Activated naive CD4-positive, alpha-beta T cell treated with anti-CD3 and anti-CD28 coated beads for 36 hours (primary cell): ENCODE measurements at regions of chr7 and their contacts with region 1.

Region 1: GRCh38 chr7:149873074-149873969 is at the start of gene ATP6V0E2:
- DNase-seq: peak; percentile 94
- H3K4me3 Mint-ChIP-seq: peak within 1 kb of the TSS; percentile 83
- H3K27ac Mint-ChIP-seq: peak within 1 kb of the TSS; percentile 88
- H3K4me1 Mint-ChIP-seq: peaks cover 72% of the 10 kb centered on the region
- H3K27me3 Mint-ChIP-seq: no peaks in the 10 kb centered on the region
- total RNA-seq, gene ATP6V0E2: 31.8 to 32.4 TPM

Region 2: GRCh38 chr7:149838224-149838947 is 34.9 kb before region 1 on chr7 and contains the start of gene ZNF862:
- CTCF ChIA-PET with region 1: interaction called, 6 read pairs
- intact Hi-C with region 1: loop called (anchors 1 kb)
- DNase-seq: peak; percentile 96
- H3K4me3 Mint-ChIP-seq: peak within 1 kb of the TSS; percentile 76
- H3K27ac Mint-ChIP-seq: peak within 1 kb of the TSS; percentile 80
- H3K4me1 Mint-ChIP-seq: peaks cover 26% of the 10 kb centered on the region
- H3K27me3 Mint-ChIP-seq: no peaks in the 10 kb centered on the region
- total RNA-seq, gene ZNF862: 17.6 to 19.4 TPM

Region 3: GRCh38 chr7:149861446-149862045 is 11.8 kb before region 1 on chr7:
- CTCF ChIA-PET with region 1: interaction called, 12 read pairs
- intact Hi-C with region 1: loop called (anchors 1 kb)
- DNase-seq: no peak
- H3K4me3 Mint-ChIP-seq: no peak overlapping the region
- H3K27ac Mint-ChIP-seq: no peak overlapping the region
- H3K4me1 Mint-ChIP-seq: peaks cover 57% of the 10 kb centered on the region
- H3K27me3 Mint-ChIP-seq: no peaks in the 10 kb centered on the region

Region 4: GRCh38 chr7:150404805-150405583 is 531.7 kb after region 1 on chr7:
- CTCF ChIA-PET with region 1: no interaction called
- intact Hi-C with region 1: loop called (anchors 5 kb)
- DNase-seq: peak; percentile 76
- H3K4me3 Mint-ChIP-seq: peak overlapping the region; percentile 85
- H3K27ac Mint-ChIP-seq: peak overlapping the region; percentile 83
- H3K4me1 Mint-ChIP-seq: peaks cover 29% of the 10 kb centered on the region
- H3K27me3 Mint-ChIP-seq: no peaks in the 10 kb centered on the region

Region 5: GRCh38 chr7:151080522-151081169 is 1207.3 kb after region 1 on chr7 and contains the start of gene FASTK:
- CTCF ChIA-PET with region 1: no interaction called
- intact Hi-C with region 1: loop called (anchors 10 kb)
- DNase-seq: peak; percentile 93
- H3K4me3 Mint-ChIP-seq: peak within 1 kb of the TSS; percentile 86
- H3K27ac Mint-ChIP-seq: peak within 1 kb of the TSS; percentile 73
- H3K4me1 Mint-ChIP-seq: peaks cover 36% of the 10 kb centered on the region
- H3K27me3 Mint-ChIP-seq: peaks cover 7% of the 10 kb centered on the region
- total RNA-seq, gene FASTK: 43.6 to 45.7 TPM